ENCODE measurements at regions of chr17 and their contacts with region 1.

Region 1: GRCh38 chr17:66383333-66383732 is 80.9 kb downstream of the PRKCA start:
- DNase-seq: no peak
- ATAC-seq: no peak
- H3K4me3 Mint-ChIP-seq: no peak overlapping the region
- H3K27ac Mint-ChIP-seq: peak overlapping the region; percentile 65
- H3K4me1 Mint-ChIP-seq: peaks cover 73% of the 10 kb centered on the region
- H3K27me3 Mint-ChIP-seq: no peaks in the 10 kb centered on the region

Region 2: GRCh38 chr17:66767154-66767933 is 384.0 kb after region 1 on chr17:
- CTCF ChIA-PET with region 1: no interaction called
- POLR2A ChIA-PET with region 1: interaction called, 10 read pairs
- intact Hi-C with region 1: no loop called
- DNase-seq: peak; percentile 19
- ATAC-seq: peak; percentile 88
- H3K4me3 Mint-ChIP-seq: no peak overlapping the region
- H3K27ac Mint-ChIP-seq: peak overlapping the region; percentile 61
- H3K4me1 Mint-ChIP-seq: peaks cover 7% of the 10 kb centered on the region
- H3K27me3 Mint-ChIP-seq: no peaks in the 10 kb centered on the region

Region 3: DNA sequence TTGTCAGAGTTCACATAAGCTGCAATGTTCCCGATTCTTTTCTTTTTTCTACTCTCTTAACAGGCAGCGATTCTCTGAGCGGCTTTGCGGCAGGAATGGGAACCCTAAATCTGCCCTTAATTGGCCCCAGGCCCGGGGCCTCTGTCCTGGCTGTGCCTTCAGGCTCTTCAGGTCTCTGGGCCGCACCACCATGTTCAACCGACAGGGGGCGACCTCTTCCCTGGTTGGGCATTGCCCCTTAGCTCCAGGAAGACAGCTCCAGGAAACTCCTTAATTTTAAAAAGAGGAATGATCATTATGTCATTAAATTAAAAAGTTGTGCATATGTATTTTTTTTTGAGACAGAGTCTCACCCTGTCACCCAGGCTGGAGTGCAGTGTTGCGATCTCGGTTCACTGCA is 471.9 kb after region 1 on chr17:
- CTCF ChIA-PET with region 1: no interaction called
- POLR2A ChIA-PET with region 1: no interaction called
- intact Hi-C with region 1: no loop called
- DNase-seq: peak; percentile 72
- ATAC-seq: no peak
- H3K4me3 Mint-ChIP-seq: no peak overlapping the region
- H3K27ac Mint-ChIP-seq: no peak overlapping the region
- H3K4me1 Mint-ChIP-seq: no peaks in the 10 kb centered on the region
- H3K27me3 Mint-ChIP-seq: no peaks in the 10 kb centered on the region

Measured in activated CD4-positive, alpha-beta T cell treated with anti-CD3 and anti-CD28 coated beads for 36 hours (primary cell).